Transverse colon (tissue), 4 donors: ENCODE measurements at regions of chr2 and their contacts with region 1.

Region 1: DNA sequence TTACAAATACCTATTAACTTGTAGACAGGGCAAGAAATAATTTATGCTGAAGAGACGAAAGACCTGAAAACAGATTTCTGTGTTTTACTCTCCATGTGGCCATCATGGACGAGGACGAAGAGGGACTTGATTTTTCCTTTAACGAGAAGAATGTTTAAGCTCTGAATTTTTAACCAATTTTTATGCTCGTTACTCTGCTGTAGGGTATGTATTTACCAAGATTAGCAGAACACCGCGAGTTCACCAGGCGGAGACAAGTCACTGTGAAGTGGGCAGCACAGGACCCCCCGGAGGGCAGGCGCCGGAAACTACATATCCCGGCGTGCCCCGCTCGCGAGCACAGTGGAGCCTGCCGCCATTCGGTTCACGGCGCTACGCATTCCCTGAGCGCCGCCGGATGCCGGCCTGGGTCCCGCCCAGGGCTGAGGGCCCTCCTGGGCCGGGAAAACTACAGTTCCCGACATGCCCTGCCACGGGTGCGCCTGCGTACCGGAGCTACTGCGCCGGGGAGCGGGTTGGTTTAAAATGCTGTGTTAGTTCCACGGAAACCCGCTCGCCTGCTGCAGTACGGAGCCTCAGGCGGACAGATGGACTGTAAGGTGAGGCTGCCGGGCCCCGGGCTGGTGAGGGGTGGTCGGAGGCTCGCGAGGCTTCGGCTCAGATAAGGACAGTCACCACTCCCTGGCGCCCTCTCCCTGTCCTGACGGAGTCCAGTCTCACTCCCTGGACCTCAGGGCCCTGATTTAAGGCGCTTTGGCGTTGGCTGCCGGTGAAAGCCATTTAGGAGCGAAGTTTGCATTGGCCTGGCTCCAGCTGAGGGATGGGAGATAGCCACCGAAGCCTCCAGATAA is at the start of gene CCDC150:
- DNase-seq: peak; percentile 94
- H3K4me3 ChIP-seq: peak within 1 kb of the TSS; percentile 51 to 63 (median 54)
- H3K27ac ChIP-seq: peak within 1 kb of the TSS in 3 of 4 donors; percentile 13 to 64 (median 61)
- H3K4me1 ChIP-seq: peaks cover 0 to 12% (median 3%) of the 10 kb centered on the region in 4 donors
- H3K27me3 ChIP-seq: no peaks in the 10 kb centered on the region
- CTCF ChIP-seq: peak in 2 of 5 experiments; percentile 3 to 18
- EP300 ChIP-seq: no peak
- POLR2A ChIP-seq: no peak
- total RNA-seq, gene CCDC150: 1.6 to 137 (median 2.7) TPM in 3 of 4 donors, not detected in the other

Region 2: DNA sequence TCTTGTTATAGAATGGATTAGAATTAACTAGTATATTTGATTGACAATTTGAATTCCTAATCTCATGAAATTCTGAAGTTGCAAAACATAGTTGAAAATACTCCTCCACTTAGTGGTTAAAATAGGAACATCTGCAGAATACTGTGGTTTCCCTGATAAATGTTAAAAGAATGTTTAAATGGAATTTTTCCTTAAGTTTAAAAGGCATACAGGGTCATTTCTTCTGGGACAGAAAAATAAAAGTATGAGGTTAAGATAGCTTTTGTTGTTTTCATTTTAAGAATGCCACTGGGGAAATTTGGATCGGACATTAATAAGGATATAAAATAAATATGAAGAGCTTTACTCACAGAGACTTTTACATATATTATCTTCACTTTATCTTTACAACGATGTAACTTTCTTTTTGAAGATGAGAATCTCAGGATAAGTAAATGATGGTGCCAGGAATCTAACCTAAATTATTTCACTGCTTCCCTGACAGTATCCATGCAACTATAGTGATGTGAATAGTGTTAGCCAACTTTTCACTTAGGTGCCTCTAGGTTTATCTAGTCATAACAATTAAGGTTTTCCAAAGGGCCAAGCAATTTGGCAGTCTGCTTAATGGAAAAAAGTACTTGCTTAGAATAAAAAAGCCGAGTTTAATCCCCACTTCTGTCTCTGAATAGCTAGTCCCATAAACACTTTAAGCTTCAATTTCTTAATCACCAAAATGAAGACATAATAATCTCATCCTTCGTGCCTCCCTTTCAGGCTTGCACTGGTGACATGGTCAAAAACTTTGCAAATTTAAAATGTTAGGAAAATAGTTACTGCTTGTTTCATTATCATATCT is 316.2 kb before region 1 on chr2:
- in situ Hi-C with region 1: loop called in 1 of 4 experiments (anchors 25 kb)
- intact Hi-C with region 1: no loop called
- DNase-seq: no peak
- H3K4me3 ChIP-seq: no peak overlapping the region
- H3K27ac ChIP-seq: no peak overlapping the region
- H3K4me1 ChIP-seq: no peaks in the 10 kb centered on the region
- H3K27me3 ChIP-seq: no peaks in the 10 kb centered on the region
- CTCF ChIP-seq: no peak
- EP300 ChIP-seq: no peak
- POLR2A ChIP-seq: no peak

Region 3: DNA sequence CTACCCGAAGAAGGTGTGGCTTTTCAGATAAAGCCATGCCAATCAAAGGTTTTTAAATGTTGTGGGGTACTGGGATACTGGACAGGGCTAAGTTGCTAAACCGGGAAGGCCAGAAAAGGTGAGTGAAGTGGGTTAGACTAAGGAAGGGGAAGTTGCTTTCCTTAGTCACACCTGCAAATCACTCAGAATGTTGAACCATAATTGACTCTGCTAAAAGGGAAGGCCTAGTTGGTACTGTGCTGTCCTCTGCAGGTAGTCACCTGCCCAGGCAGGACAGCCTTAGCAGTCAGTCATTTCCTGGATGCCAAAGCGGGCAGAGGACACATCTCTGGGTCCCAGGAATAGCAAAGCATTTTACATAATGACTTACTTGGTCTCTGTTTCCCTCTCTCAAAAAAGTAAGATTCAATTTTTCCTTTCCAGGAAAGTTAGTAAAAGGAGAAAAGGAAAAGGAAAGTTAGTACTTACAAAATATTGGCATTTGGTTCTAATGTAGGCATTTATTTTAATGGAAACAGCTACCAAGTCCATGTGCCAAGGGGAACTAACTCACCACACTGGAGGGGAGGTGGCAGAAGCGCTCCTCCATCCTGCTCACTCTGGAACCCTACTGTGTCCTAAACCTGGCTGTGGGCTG is 975.7 kb after region 1 on chr2:
- in situ Hi-C with region 1: no loop called
- intact Hi-C with region 1: no loop called
- DNase-seq: peak; percentile 52
- H3K4me3 ChIP-seq: no peak overlapping the region
- H3K27ac ChIP-seq: peak overlapping the region; percentile 34 to 57 (median 46)
- H3K4me1 ChIP-seq: peaks cover 0 to 18% (median 6%) of the 10 kb centered on the region in 4 donors
- H3K27me3 ChIP-seq: no peaks in the 10 kb centered on the region
- CTCF ChIP-seq: peak in 3 of 5 experiments; percentile 44 to 67 (median 54)
- EP300 ChIP-seq: no peak
- POLR2A ChIP-seq: no peak

Region 4: DNA sequence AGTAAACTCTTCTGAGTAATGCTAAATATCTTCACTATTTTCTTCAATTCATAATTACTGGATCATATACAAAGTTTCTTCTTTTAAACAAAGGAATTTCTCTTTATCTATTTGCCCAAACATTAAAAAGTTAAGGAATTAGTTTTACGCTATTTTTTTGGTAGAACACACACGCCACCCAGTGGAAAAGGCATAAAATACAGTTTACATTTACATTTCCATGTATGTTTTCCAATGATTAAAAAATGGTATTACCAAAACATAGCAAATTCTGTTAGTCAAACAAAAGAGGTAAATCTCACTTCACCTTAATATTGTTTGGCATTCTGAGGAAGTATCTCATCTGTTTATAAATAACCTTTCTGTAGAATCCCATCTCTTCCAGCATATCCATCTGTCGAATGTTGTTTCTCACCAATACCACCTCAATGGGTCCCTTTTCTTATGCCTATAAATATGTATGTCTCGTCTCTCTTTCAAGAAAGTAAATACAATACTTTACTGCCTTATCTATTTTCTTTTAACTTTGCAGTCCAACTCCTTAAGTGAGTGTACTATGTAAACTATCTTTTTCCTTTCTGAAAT is 1138.5 kb after region 1 on chr2:
- in situ Hi-C with region 1: no loop called
- intact Hi-C with region 1: no loop called
- DNase-seq: no peak
- H3K4me3 ChIP-seq: no peak overlapping the region
- H3K27ac ChIP-seq: no peak overlapping the region
- H3K4me1 ChIP-seq: peaks cover 0 to 7% (median 0%) of the 10 kb centered on the region in 4 donors
- H3K27me3 ChIP-seq: no peaks in the 10 kb centered on the region
- CTCF ChIP-seq: peak; percentile 66 to 75 (median 67)
- EP300 ChIP-seq: no peak
- POLR2A ChIP-seq: no peak